Naive thymus-derived CD4-positive, alpha-beta T cell (primary cell): ENCODE measurements at regions of chr4 and their contacts with region 1.

Region 1: GRCh38 chr4:123599920-123600810 is 203.6 kb downstream of the SPRY1 start:
- DNase-seq: peak in 8 of 9 donors; percentile 16 to 66 (median 36)
- ATAC-seq: peak; percentile 95
- H3K4me3 ChIP-seq: no peak overlapping the region
- H3K4me3 Mint-ChIP-seq: peak overlapping the region; percentile 17 to 83 (median 52)
- H3K27ac ChIP-seq: no peak overlapping the region
- H3K27ac Mint-ChIP-seq: peak overlapping the region; percentile 4 to 94 (median 70)
- H3K4me1 ChIP-seq: peaks cover 6 to 14% of the 10 kb centered on the region in 2 donors
- H3K4me1 Mint-ChIP-seq: peaks cover 10 to 50% (median 28%) of the 10 kb centered on the region in 7 donors
- H3K27me3 ChIP-seq: no peaks in the 10 kb centered on the region
- H3K27me3 Mint-ChIP-seq: peaks cover 0 to 4% (median 0%) of the 10 kb centered on the region in 5 donors

Region 2: GRCh38 chr4:123421937-123422781 is 178.0 kb before region 1 on chr4:
- CTCF ChIA-PET with region 1: no interaction called
- POLR2A ChIA-PET with region 1: no interaction called
- intact Hi-C with region 1: loop called in 1 of 2 experiments (anchors 1 kb)
- DNase-seq: no peak
- ATAC-seq: peak; percentile 49
- H3K4me3 ChIP-seq: peak overlapping the region; percentile 14
- H3K4me3 Mint-ChIP-seq: peak overlapping the region; percentile 35 to 86 (median 72)
- H3K27ac ChIP-seq: peak overlapping the region; percentile 58
- H3K27ac Mint-ChIP-seq: peak overlapping the region in 6 of 9 donors; percentile 32 to 95 (median 63)
- H3K4me1 ChIP-seq: no peaks in the 10 kb centered on the region
- H3K4me1 Mint-ChIP-seq: peaks cover 5 to 66% (median 12%) of the 10 kb centered on the region in 7 donors
- H3K27me3 ChIP-seq: no peaks in the 10 kb centered on the region
- H3K27me3 Mint-ChIP-seq: peaks cover 0 to 8% (median 0%) of the 10 kb centered on the region in 5 donors

Region 3: DNA sequence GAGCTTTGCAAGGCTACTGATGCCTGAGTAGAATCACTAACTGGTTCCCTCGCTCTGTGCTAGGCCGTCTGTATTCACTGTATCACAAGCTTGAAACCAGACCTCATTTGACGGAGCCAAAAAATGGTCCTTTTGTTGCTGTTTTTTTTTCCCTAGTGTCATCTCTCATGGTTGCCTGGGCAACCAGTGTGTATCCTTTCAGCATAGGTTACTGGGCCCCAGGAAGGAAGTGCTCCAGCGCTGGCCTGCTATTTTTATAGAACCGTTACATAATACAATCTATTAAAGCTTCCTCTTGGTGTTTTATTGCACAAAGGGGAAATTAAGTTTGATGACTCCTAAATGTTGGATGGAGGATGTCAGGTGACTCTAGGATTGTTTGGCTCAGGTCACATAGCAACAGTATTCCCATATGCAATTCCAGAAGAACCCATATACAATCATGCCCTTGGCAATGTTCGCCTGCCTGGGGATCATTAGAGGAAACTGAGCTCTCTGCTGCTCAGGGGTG is 16.8 kb after region 1 on chr4:
- CTCF ChIA-PET with region 1: no interaction called
- POLR2A ChIA-PET with region 1: no interaction called
- intact Hi-C with region 1: loop called in 1 of 2 experiments (anchors 1 kb)
- DNase-seq: peak in 7 of 9 donors; percentile 34 to 75 (median 62)
- ATAC-seq: peak; percentile 94
- H3K4me3 ChIP-seq: no peak overlapping the region
- H3K4me3 Mint-ChIP-seq: peak overlapping the region in 7 of 10 donors; percentile 16 to 64 (median 41)
- H3K27ac ChIP-seq: peak overlapping the region; percentile 8
- H3K27ac Mint-ChIP-seq: peak overlapping the region; percentile 37 to 92 (median 73)
- H3K4me1 ChIP-seq: peaks cover 12% of the 10 kb centered on the region in 2 donors
- H3K4me1 Mint-ChIP-seq: peaks cover 5 to 21% (median 17%) of the 10 kb centered on the region in 7 donors
- H3K27me3 ChIP-seq: no peaks in the 10 kb centered on the region
- H3K27me3 Mint-ChIP-seq: peaks cover 0 to 16% (median 0%) of the 10 kb centered on the region in 5 donors

Region 4: DNA sequence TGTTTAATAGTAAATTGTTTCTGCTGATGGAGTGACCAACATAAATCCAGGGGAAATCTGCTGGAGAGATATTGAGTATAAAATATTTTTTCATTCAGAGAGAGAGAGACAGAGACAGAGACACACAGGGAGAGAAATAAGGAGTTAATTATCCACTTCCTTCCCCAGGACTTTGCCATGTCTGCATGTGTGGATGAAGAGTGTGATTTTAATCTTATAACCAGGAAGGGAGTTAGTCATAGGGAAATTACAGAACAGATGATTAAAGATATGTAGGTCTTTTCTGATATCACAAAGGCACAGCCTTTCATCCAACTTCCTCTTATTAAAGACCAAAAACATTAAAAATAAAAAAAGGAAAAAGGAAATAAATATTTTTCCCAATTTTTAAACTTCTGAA is 322.7 kb after region 1 on chr4:
- CTCF ChIA-PET with region 1: no interaction called
- POLR2A ChIA-PET with region 1: no interaction called
- intact Hi-C with region 1: no loop called
- DNase-seq: no peak
- ATAC-seq: no peak
- H3K4me3 ChIP-seq: no peak overlapping the region
- H3K4me3 Mint-ChIP-seq: no peak overlapping the region
- H3K27ac ChIP-seq: no peak overlapping the region
- H3K27ac Mint-ChIP-seq: no peak overlapping the region
- H3K4me1 ChIP-seq: no peaks in the 10 kb centered on the region
- H3K4me1 Mint-ChIP-seq: no peaks in the 10 kb centered on the region
- H3K27me3 ChIP-seq: no peaks in the 10 kb centered on the region
- H3K27me3 Mint-ChIP-seq: peaks cover 0 to 2% (median 0%) of the 10 kb centered on the region in 5 donors